Sciatic nerve (tissue), 2 donors: ENCODE measurements at regions of chr19 and their contacts with region 1.

Region 1: GRCh38 chr19:18700501-18701249 is 17.2 kb downstream of the CRTC1 start:
- DNase-seq: peak; percentile 85
- ATAC-seq: peak; percentile 92

Region 2: GRCh38 chr19:18456974-18457373 is 243.7 kb before region 1 on chr19:
- intact Hi-C with region 1: loop called (anchors 1 kb)
- DNase-seq: no peak
- ATAC-seq: peak; percentile 8